ENCODE measurements at regions of chr6 and their contacts with region 1.

Region 1: DNA sequence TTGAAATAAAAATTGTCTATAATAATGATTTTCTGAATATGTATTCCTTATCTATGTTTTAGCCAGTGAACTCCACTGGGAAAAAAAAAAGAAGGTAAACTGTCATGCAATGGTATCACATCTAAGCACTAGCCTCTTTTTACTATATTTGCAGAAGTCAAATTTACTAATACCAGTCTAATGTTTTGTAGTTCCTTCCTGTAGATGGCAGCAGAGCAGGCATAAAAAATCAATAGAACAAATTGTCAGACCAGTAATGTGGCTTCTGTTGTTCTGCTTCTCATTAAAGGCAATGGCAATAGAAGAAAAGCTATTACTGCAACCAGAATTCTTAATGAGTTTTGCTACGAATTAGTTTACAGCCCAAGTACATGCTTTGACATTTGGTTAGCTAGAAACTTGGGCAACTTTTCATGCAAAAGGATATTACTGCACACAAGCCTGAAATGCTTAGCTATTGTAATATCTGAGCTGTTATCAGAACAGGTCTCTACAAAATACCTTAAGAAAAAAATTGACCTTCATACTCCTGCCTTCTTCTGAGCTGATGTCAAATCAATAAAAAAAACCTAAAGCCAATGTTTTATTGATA is 476.9 kb downstream of the KHDRBS2 start:
- DNase-seq: no peak
- H3K4me3 ChIP-seq: no peak overlapping the region
- H3K27ac ChIP-seq: no peak overlapping the region
- H3K27me3 ChIP-seq: no peaks in the 10 kb centered on the region
- CTCF ChIP-seq: peak; percentile 31 to 82 (median 60)

Region 2: DNA sequence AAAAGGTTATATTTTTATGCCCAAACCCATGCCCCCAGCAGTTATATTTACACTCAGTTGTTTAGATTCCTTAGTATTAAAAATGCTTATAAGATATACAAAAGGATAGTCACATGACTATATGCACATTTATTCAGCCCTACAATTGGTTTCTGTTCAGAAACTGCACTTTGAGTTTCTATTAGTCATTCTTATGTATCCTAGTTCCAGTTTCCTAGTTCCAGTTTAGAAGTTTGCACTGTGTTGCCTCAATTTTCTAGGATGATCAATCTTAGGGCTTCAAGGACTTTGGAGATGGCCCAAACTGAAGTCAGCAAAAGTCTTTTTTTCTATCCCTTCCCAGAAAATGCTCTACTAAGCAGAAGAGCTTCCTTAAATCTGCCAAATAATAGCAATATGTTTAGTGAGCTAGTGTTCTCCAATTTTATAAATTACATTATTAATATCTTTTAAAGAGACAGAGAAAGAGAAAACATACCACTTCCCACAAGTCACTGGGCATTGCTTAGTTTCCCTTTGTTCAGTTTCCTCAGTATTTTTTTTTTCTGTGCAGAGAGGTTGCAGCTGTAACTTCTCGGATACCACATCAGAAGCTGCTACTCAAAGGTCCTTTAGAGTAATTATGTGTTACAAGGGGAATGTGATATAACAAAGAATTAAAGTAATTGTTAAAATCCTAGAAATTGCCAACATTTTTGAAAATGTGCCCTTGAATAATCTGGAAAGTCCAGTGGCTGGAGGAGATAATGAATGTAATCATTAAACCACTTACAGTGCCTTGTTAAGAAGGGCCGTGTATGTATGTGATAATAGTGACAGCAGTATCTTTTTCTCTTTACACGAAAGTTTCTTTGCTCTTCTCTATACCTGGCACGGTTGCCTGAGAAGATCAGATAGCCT is 338.1 kb after region 1 on chr6:
- intact Hi-C with region 1: loop called in 1 of 2 experiments (anchors 5 kb)
- DNase-seq: no peak
- H3K4me3 ChIP-seq: no peak overlapping the region
- H3K27ac ChIP-seq: no peak overlapping the region
- H3K27me3 ChIP-seq: no peaks in the 10 kb centered on the region
- CTCF ChIP-seq: no peak

Region 3: GRCh38 chr6:62285612-62286469 is 476.7 kb after region 1 on chr6 and contains the start of gene KHDRBS2:
- intact Hi-C with region 1: loop called in 1 of 2 experiments (anchors 10 kb)
- DNase-seq: peak; percentile 68 to 99 (median 95)
- H3K4me3 ChIP-seq: peak within 1 kb of the TSS; percentile 44 to 88 (median 74)
- H3K27ac ChIP-seq: peak within 1 kb of the TSS in 54 of 59 donors; percentile 17 to 90 (median 70)
- H3K27me3 ChIP-seq: no peaks in the 10 kb centered on the region
- CTCF ChIP-seq: peak in 7 of 56 donors; percentile 5 to 33 (median 18)
- total RNA-seq, gene KHDRBS2: 18.9 to 52.4 (median 38.9) TPM